Ovary (tissue), 10 donors: ENCODE measurements at regions of chr17 and their contacts with region 1.

Region 1: DNA sequence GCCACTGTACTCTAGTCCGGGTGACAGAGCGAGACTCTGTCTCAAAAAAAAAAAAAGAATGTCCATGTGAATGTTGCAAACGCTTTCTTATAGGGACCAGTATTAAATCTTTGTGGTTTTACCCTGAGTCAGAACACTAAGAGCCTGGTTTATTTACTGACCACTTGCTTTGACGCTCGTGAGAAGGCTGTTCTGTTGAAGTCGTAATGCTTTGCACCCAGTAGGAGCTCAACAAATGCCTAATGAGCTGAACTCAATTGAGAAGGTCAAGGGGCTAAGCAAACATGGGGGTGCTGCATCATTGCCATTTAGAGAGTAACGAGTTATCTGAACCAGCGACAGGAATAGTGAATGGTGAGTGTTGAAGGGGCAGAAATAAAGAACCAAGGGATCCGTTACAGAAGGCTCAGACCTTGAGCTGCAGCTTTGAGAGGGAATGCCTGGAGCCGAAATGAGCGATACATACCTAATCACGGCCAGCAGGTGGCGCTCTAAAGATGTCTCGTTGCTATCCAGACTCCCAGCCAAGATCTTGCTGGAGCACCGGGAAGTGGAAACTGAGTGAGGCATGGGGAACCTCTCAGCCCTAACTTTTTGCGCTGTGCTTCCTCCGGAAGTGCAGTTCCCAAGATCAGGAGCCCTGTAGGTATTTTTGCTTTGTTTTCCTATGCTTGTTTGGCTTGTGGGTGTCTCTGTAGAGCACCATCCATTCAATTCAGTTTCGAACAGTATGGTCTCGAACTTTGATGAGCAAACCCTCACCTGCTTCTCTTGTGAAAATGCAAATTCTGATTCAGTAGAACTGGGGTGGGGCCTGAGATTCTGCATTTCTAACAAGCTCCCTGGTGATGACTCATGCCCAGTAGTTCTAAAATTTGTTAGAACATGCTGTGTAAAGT is 12.6 kb upstream of the RNF222 start:
- DNase-seq: peak; percentile 86 to 94 (median 92)
- H3K4me3 ChIP-seq: no peak overlapping the region
- H3K27ac ChIP-seq: no peak overlapping the region
- H3K4me1 ChIP-seq: no peaks in the 10 kb centered on the region
- H3K27me3 ChIP-seq: no peaks in the 10 kb centered on the region
- CTCF ChIP-seq: peak; percentile 71 to 80 (median 80)
- EP300 ChIP-seq: no peak
- POLR2A ChIP-seq: no peak

Region 2: GRCh38 chr17:8447799-8448198 is 37.6 kb after region 1 on chr17:
- intact Hi-C with region 1: no loop called
- DNase-seq: no peak
- H3K4me3 ChIP-seq: no peak overlapping the region
- H3K27ac ChIP-seq: no peak overlapping the region
- H3K4me1 ChIP-seq: no peaks in the 10 kb centered on the region
- H3K27me3 ChIP-seq: no peaks in the 10 kb centered on the region
- CTCF ChIP-seq: no peak
- EP300 ChIP-seq: no peak
- POLR2A ChIP-seq: no peak

Region 3: DNA sequence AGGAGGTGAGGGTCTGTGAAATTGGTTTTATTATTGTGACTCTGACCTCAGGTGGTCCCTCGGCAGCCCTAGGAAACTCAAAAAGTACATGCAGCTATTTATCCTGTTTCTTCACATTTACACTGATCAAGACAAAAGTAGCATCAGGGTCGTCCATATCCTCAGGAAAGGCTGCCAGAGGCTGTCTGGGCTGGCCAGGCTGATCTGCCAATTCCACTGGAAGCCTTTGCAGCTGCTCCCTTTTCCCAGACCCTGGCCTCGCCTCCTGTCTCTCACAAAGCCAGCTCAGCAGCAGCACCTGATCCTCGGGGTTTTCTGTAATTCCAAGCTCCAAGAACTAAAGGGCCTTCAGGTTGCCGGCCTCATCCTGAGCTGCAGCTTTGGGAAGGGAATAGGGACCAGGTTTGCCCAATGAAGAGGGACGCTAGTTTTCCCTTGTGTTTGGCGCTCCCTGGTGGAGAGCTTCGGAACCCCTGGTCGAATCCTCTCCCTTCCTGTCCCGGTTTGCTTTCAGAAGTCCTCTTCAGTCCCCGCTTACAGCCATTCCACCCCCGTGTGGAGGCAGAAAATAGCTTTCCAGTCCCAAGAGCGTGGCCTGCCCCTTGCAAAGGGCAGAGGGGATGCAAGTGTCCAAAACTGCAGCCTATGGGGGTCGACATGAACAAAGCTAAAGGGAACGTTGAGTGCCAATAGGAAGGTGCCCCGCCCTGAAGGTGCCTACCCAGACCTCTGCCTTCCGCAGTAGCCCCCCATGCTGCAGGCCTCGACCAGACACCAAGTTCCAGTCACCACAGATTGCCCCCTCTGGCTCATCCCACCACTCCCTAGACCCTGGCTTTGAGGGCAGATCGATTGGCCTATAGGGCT is 375.6 kb after region 1 on chr17:
- intact Hi-C with region 1: loop called in 2 of 4 experiments (anchors 10 kb)
- DNase-seq: peak; percentile 45 to 85 (median 71)
- H3K4me3 ChIP-seq: no peak overlapping the region
- H3K27ac ChIP-seq: no peak overlapping the region
- H3K4me1 ChIP-seq: no peaks in the 10 kb centered on the region
- H3K27me3 ChIP-seq: no peaks in the 10 kb centered on the region
- CTCF ChIP-seq: peak; percentile 25 to 51 (median 41)
- EP300 ChIP-seq: no peak
- POLR2A ChIP-seq: no peak